ENCODE measurements at regions of chr7 and their contacts with region 1.

Region 1: DNA sequence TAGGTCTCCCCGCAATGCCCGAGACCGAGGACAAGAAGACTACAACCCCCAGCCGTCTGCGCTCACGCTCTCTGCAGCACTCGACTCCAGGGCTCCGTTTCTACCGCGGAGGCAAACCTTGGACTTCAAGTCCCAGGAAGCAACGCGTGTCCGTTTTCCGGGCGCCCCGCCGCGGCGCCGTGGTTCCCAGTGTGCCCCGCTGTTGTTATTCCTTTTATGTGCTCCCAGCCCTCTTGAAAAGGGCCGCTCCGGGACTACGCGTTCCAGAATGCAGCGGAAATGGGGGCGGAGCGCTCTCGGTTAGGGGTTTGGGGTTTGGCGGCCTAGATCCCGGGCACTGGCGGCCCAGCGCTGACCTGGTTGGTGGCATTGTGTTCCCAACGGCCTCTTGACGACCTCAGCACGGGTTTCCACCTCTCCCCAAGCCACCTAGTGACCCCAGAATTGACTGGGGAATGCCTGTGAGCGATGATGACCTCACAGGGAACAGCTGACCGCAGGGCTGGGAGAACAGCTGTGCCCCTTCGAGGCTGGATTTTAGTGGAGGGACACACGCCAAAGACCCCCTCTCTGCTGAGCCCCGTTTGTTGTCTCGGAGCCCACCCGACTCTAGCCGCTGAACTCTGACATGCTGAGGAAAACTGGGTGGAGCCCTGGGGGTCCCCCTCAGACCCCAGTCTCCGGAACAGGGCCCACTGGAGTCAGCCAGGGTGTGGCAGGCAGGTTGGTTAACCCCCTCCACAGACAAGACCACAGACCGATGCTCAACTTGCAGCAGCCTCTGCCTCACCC is 488 bp upstream of the CDK5 start:
- DNase-seq: peak; percentile 99 to 100
- H3K4me3 ChIP-seq: peak overlapping the region; percentile 87 to 91
- H3K27ac ChIP-seq: peak overlapping the region; percentile 99
- H3K4me1 ChIP-seq: peaks cover 57% of the 10 kb centered on the region
- H3K27me3 ChIP-seq: no peaks in the 10 kb centered on the region
- CTCF ChIP-seq: peak in 1 of 3 experiments; percentile 4
- POLR2A ChIP-seq: peak; percentile 82 to 86

Region 2: DNA sequence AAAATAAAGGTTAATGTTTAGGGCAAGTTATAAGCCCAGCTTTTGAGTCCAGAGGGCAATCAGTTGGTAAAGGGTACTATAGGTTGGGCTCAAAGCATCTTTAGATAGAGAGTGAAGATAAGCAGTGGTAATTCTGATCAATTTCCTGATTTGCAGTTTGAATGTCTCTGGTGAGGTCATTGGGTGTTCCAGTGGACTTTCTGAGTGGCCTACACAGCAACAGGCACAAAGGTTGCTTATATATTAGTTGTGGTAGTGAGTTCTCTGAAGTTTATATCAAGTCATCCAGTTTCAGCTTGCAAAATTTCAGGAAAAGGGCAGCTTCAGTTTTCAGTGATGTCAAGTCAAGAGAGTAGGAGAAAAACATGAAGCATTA is 291.9 kb before region 1 on chr7:
- intact Hi-C with region 1: no loop called
- DNase-seq: no peak
- H3K4me3 ChIP-seq: no peak overlapping the region
- H3K27ac ChIP-seq: no peak overlapping the region
- H3K4me1 ChIP-seq: no peaks in the 10 kb centered on the region
- H3K27me3 ChIP-seq: no peaks in the 10 kb centered on the region
- CTCF ChIP-seq: no peak
- POLR2A ChIP-seq: no peak

Region 3: GRCh38 chr7:151038951-151039849 is 19.0 kb before region 1 on chr7:
- intact Hi-C with region 1: no loop called
- DNase-seq: no peak
- H3K4me3 ChIP-seq: no peak overlapping the region
- H3K27ac ChIP-seq: peak overlapping the region; percentile 73
- H3K4me1 ChIP-seq: peaks cover 21% of the 10 kb centered on the region
- H3K27me3 ChIP-seq: no peaks in the 10 kb centered on the region
- CTCF ChIP-seq: no peak
- POLR2A ChIP-seq: no peak

Region 4: GRCh38 chr7:151085691-151086620 is 27.8 kb after region 1 on chr7 and contains the start of gene AGAP3:
- intact Hi-C with region 1: loop called (anchors 2 kb)
- DNase-seq: no peak
- H3K4me3 ChIP-seq: peak within 1 kb of the TSS; percentile 80 to 82
- H3K27ac ChIP-seq: peak within 1 kb of the TSS; percentile 97
- H3K4me1 ChIP-seq: peaks cover 70% of the 10 kb centered on the region
- H3K27me3 ChIP-seq: no peaks in the 10 kb centered on the region
- CTCF ChIP-seq: no peak
- POLR2A ChIP-seq: peak in 1 of 2 donors; percentile 60
- total RNA-seq, gene AGAP3: 98.2 TPM

Region 5: GRCh38 chr7:151232091-151232916 is 174.1 kb after region 1 on chr7 and contains the start of gene CHPF2:
- intact Hi-C with region 1: loop called (anchors 10 kb)
- DNase-seq: no peak
- H3K4me3 ChIP-seq: peak within 1 kb of the TSS; percentile 87 to 89
- H3K27ac ChIP-seq: peak within 1 kb of the TSS; percentile 72
- H3K4me1 ChIP-seq: peaks cover 37% of the 10 kb centered on the region
- H3K27me3 ChIP-seq: no peaks in the 10 kb centered on the region
- CTCF ChIP-seq: no peak
- POLR2A ChIP-seq: peak in 1 of 2 donors; percentile 68
- total RNA-seq, gene CHPF2: 28.0 TPM